SK-N-SH (cell line): ENCODE measurements at regions of chr5 and their contacts with region 1.

Region 1: GRCh38 chr5:136249678-136250266 is 56.8 kb upstream of the SMIM32 start:
- DNase-seq: peak; percentile 55
- H3K4me3 ChIP-seq: no peak overlapping the region; a peak in 1 of 4 replicates
- H3K27ac ChIP-seq: no peak overlapping the region
- H3K4me1 ChIP-seq: no peaks in the 10 kb centered on the region
- H3K27me3 ChIP-seq: peaks cover 10% of the 10 kb centered on the region
- CTCF ChIP-seq: peak; percentile 97
- EP300 ChIP-seq: no peak
- RAD21 ChIP-seq: peak; percentile 93

Region 2: DNA sequence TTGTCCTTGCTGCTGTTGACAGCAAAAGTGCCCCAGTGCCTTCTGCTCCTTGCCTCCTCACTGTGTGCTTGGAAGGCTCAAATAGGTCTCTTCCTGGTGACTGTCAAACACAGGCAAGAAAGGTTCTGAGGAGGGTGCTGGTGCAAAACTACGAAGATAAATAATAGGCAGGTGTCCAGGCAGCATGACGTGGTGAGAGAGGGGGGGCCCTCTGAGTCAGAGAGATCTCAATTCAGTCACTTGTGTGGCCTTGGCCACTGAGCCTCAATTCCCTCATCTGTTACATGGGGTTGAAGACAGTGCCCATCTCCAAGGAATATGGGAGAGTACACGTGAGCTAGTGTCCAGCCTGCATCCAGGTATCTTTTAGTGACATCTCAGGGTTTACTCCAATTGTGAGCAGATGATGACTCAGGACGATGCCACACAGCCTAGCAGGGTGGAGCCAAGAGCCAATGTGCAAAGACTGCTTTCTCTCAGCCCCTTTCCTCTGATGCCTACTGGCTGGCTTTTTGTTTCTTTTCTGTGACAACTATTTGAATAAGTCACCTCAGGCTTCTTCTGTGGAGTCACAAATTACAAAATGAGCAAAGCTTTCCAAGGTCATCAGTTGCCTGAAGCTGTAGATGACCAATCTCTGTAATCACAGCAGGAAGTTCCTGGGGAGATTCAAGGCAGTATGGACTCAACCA is 27.0 kb before region 1 on chr5:
- CTCF ChIA-PET with region 1: interaction called, 14 read pairs
- POLR2A ChIA-PET with region 1: no interaction called
- DNase-seq: no peak
- H3K4me3 ChIP-seq: no peak overlapping the region
- H3K27ac ChIP-seq: no peak overlapping the region
- H3K4me1 ChIP-seq: no peaks in the 10 kb centered on the region
- H3K27me3 ChIP-seq: no peaks in the 10 kb centered on the region
- CTCF ChIP-seq: no peak
- EP300 ChIP-seq: no peak
- RAD21 ChIP-seq: no peak

Region 3: DNA sequence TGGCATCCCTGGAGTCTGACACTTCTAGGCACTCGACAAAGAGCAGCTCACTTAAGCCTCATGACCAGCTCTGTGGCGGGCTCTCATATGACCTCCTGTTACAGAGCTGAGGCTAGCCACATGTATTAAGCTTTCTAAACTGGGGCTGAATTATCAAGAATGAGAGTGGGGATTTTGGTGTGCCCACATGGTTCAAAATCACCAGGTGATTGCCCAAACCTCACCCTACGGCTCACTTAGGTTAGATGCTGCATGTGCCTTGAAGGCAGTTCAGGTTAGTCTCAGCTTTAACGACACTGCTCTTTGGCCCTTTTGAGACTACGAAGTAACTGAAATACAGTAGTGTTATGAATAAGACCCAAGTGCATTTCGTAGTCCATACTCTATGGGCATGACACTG is 17.5 kb before region 1 on chr5:
- CTCF ChIA-PET with region 1: interaction called, 85 read pairs
- POLR2A ChIA-PET with region 1: no interaction called
- DNase-seq: no peak
- H3K4me3 ChIP-seq: no peak overlapping the region
- H3K27ac ChIP-seq: no peak overlapping the region
- H3K4me1 ChIP-seq: peaks cover 0 to 13% of the 10 kb centered on the region in 2 experiments; a peak in 2 of 4 replicates
- H3K27me3 ChIP-seq: peaks cover 8% of the 10 kb centered on the region; the same call in 1 of the 2 replicates
- CTCF ChIP-seq: no peak
- EP300 ChIP-seq: no peak
- RAD21 ChIP-seq: no peak

Region 4: DNA sequence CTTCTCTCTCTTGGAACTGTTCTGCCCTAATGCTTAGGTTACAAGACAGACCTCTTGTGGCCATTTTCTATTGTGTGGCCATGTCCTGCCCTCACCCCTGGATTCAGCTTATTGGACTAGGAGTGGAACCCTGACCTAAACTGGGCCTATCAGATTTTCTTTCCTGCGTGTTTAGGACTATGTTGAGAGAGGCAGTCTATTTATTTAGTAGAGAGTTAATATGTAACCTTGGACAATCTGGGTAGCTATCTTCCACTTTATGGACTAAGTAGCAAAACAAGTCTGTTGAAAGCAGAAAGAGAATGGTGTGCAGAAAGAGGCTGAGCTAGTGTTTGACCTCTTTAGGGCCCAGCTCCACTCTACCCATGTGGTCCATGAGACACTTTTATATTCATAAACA is 25.8 kb after region 1 on chr5:
- CTCF ChIA-PET with region 1: interaction called, 23 read pairs
- POLR2A ChIA-PET with region 1: no interaction called
- DNase-seq: no peak
- H3K4me3 ChIP-seq: no peak overlapping the region
- H3K27ac ChIP-seq: no peak overlapping the region
- H3K4me1 ChIP-seq: no peaks in the 10 kb centered on the region
- H3K27me3 ChIP-seq: no peaks in the 10 kb centered on the region
- CTCF ChIP-seq: no peak
- EP300 ChIP-seq: no peak
- RAD21 ChIP-seq: no peak

Region 5: DNA sequence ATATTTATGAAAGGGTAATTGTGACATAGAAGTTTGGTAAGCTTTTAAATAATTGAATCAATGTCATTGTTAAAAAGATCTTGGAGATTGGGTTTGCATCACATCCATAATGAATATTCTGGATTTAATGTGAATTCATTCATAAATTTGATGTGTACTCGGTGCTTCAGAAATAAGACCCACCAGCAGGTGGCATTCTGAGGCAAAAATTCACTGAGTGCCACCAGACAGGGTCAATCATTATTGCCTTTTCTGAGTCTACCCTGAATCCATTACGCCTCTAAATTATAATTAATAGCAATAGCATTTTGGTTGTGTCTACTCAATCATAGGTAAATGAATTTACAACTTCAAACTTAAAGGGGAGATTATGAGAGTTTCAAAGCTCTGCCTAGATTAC is 114.5 kb after region 1 on chr5:
- CTCF ChIA-PET with region 1: interaction called, 16 read pairs
- POLR2A ChIA-PET with region 1: no interaction called
- DNase-seq: peak; percentile 30
- H3K4me3 ChIP-seq: no peak overlapping the region
- H3K27ac ChIP-seq: no peak overlapping the region
- H3K4me1 ChIP-seq: no peaks in the 10 kb centered on the region; a peak in 1 of 4 replicates
- H3K27me3 ChIP-seq: no peaks in the 10 kb centered on the region
- CTCF ChIP-seq: peak; percentile 60
- EP300 ChIP-seq: no peak
- RAD21 ChIP-seq: peak; percentile 57

Region 6: GRCh38 chr5:136424835-136425584 is 175.2 kb after region 1 on chr5:
- CTCF ChIA-PET with region 1: interaction called, 50 read pairs
- POLR2A ChIA-PET with region 1: interaction called, 3 read pairs
- DNase-seq: peak; percentile 66
- H3K4me3 ChIP-seq: peak overlapping the region in 1 of 2 experiments; percentile 35; a peak in 1 of 4 replicates
- H3K27ac ChIP-seq: no peak overlapping the region
- H3K4me1 ChIP-seq: peaks cover 0 to 4% of the 10 kb centered on the region in 2 experiments; a peak in 1 of 4 replicates
- H3K27me3 ChIP-seq: no peaks in the 10 kb centered on the region; the same call in 1 of the 2 replicates
- CTCF ChIP-seq: peak; percentile 80
- EP300 ChIP-seq: no peak
- RAD21 ChIP-seq: peak; percentile 74

Region 7: GRCh38 chr5:136769900-136770684 is 520.3 kb after region 1 on chr5:
- CTCF ChIA-PET with region 1: interaction called, 98 read pairs
- POLR2A ChIA-PET with region 1: no interaction called
- DNase-seq: peak; percentile 73
- H3K4me3 ChIP-seq: no peak overlapping the region; a peak in 1 of 4 replicates
- H3K27ac ChIP-seq: no peak overlapping the region
- H3K4me1 ChIP-seq: no peaks in the 10 kb centered on the region; a peak in 1 of 4 replicates
- H3K27me3 ChIP-seq: no peaks in the 10 kb centered on the region; the same call in none of the 2 replicates
- CTCF ChIP-seq: peak; percentile 91
- EP300 ChIP-seq: no peak
- RAD21 ChIP-seq: peak; percentile 92